ENCODE measurements at regions of chr1 and their contacts with region 1.

Region 1: GRCh38 chr1:27643701-27644625 is 9.0 kb upstream of the FGR start:
- DNase-seq: peak; percentile 75
- H3K4me3 Mint-ChIP-seq: no peak overlapping the region
- H3K27ac Mint-ChIP-seq: no peak overlapping the region
- H3K4me1 Mint-ChIP-seq: peaks cover 17% of the 10 kb centered on the region
- H3K27me3 Mint-ChIP-seq: peaks cover 16% of the 10 kb centered on the region

Region 2: GRCh38 chr1:27372808-27373690 is 270.9 kb before region 1 on chr1:
- CTCF ChIA-PET with region 1: no interaction called
- DNase-seq: no peak
- H3K4me3 Mint-ChIP-seq: no peak overlapping the region
- H3K27ac Mint-ChIP-seq: no peak overlapping the region
- H3K4me1 Mint-ChIP-seq: peaks cover 27% of the 10 kb centered on the region
- H3K27me3 Mint-ChIP-seq: peaks cover 29% of the 10 kb centered on the region

Region 3: DNA sequence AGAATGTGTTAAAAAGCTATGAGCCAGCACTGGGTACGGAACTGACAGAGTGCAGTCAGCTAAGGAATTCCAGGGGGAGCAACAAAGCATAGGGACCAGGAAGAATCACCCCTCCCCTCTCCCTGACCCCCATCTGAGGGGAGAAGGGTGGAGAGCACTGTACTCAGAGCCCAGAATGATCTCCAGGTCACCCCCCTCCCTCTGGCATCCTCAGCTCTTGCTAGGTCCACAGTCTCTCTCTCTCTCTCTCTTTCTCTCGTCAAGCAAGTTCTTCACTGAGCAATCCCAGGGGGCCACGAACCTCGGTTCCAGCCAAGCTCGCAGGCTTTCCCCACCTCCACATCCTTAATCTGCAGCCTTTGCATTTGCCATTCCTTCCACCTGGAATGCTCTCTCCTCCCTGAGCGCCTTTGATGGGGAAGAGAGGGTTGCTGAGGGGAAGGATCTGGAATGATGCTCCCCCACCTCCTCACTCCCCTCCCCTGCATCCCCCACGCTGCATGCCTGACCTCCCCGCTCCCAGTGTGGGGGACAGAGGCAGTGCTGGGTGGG is 147.3 kb before region 1 on chr1:
- CTCF ChIA-PET with region 1: no interaction called
- DNase-seq: no peak
- H3K4me3 Mint-ChIP-seq: no peak overlapping the region
- H3K27ac Mint-ChIP-seq: no peak overlapping the region
- H3K4me1 Mint-ChIP-seq: peaks cover 24% of the 10 kb centered on the region
- H3K27me3 Mint-ChIP-seq: peaks cover 13% of the 10 kb centered on the region

Region 4: DNA sequence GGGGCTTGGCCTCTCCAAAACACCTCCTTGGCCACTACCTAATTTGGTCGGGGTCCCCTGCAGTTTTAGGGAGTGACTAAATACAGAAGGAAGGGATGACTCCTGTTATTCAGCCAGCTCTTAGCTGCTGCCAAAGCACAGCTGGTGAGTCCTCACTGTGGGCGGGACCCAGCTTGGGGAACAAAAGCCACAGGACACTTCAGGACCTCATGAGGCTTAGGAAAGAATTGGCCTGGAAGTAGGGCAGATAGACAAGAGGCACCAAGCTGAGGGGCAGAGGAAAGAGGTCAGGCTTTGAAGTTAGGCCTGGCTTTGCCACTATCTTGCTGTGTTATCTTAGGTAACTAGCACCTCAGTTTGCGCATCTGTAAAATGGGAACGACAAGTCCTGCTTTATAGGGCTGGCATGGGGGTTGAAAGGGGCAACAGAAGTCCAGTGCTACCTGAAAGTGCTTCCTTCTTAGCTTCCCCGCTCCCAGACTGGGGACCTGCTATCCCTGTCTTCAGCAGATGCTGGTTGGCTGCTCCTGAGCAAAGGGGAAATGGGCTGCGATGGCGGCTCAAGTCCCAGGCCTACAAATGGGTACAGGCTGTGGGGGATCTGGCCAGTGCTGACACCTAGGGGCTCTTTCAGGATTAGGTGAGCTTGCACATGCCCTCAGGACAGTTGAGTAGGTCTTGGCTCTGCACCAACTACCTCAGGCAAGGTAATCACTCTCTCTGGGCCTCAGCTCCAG is 12.4 kb after region 1 on chr1:
- CTCF ChIA-PET with region 1: interaction called, 12 read pairs
- DNase-seq: no peak
- H3K4me3 Mint-ChIP-seq: no peak overlapping the region
- H3K27ac Mint-ChIP-seq: no peak overlapping the region
- H3K4me1 Mint-ChIP-seq: peaks cover 34% of the 10 kb centered on the region
- H3K27me3 Mint-ChIP-seq: no peaks in the 10 kb centered on the region

Measured in activated naive CD4-positive, alpha-beta T cell treated with anti-CD3 and anti-CD28 coated beads, Interleukin-2, amount 10 ng/mL, durations not matched to agents 7 days and 5 days (primary cell).